CD14-positive monocyte (primary cell): ENCODE measurements at regions of chr19 and their contacts with region 1.

Region 1: GRCh38 chr19:55088543-55089341 is 13.1 kb downstream of the EPS8L1 start:
- DNase-seq: peak; percentile 40 to 57 (median 54)
- H3K4me3 ChIP-seq: no peak overlapping the region
- H3K4me3 Mint-ChIP-seq: peak overlapping the region; percentile 44 to 91
- H3K27ac ChIP-seq: no peak overlapping the region
- H3K27ac Mint-ChIP-seq: peak overlapping the region in 4 of 7 donors; percentile 40 to 79 (median 52)
- H3K4me1 ChIP-seq: peaks cover 18 to 21% of the 10 kb centered on the region in 2 donors
- H3K4me1 Mint-ChIP-seq: peaks cover 26% of the 10 kb centered on the region
- H3K27me3 ChIP-seq: peaks cover 21 to 48% of the 10 kb centered on the region in 2 donors
- H3K27me3 Mint-ChIP-seq: peaks cover 47 to 55% (median 52%) of the 10 kb centered on the region in 3 donors
- CTCF ChIP-seq: peak; percentile 96

Region 2: DNA sequence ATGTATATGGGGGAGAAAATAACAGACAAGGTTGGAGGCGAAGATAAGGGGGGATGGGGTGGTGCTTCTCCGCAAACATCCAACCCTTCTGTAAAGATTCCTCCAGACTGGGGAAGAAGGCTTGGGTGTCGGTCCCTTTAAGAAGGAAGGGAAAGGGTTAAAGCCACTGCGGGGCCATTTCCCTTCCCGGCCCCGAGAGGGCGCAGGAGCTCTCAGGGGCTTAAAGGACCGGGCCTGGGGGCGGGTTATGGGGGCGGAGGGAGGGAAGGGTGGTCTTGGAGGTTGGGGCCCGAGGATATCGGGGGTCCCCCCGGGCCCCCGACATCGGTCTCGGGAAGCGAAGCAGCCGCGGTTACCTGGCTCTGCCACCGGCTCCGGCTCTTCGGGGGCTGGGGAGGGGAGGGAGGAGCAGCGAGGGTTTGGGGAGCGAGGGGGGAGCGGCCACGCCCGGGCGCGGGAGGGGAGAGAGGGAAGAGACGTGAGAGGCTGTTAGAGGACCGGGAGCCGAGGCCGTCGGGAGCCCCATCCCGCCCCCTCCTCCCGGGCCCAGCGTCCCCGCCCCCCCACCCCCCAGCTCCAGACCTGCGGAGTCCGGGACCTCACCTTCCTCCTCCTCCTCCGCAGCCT is 57.4 kb after region 1 on chr19:
- intact Hi-C with region 1: no loop called
- DNase-seq: no peak
- H3K4me3 ChIP-seq: peak overlapping the region; percentile 1 to 62 (median 11)
- H3K4me3 Mint-ChIP-seq: peak overlapping the region; percentile 31 to 57
- H3K27ac ChIP-seq: no peak overlapping the region
- H3K27ac Mint-ChIP-seq: no peak overlapping the region
- H3K4me1 ChIP-seq: peaks cover 25 to 30% of the 10 kb centered on the region in 2 donors
- H3K4me1 Mint-ChIP-seq: peaks cover 26% of the 10 kb centered on the region
- H3K27me3 ChIP-seq: peaks cover 10 to 55% of the 10 kb centered on the region in 2 donors
- H3K27me3 Mint-ChIP-seq: peaks cover 63 to 82% (median 76%) of the 10 kb centered on the region in 3 donors
- CTCF ChIP-seq: peak; percentile 54

Region 3: GRCh38 chr19:55166530-55167268 is 78.0 kb after region 1 on chr19 and contains the start of gene DNAAF3:
- intact Hi-C with region 1: loop called in 1 of 2 experiments (anchors 10 kb)
- DNase-seq: peak; percentile 64 to 80 (median 70)
- H3K4me3 ChIP-seq: peak within 1 kb of the TSS in 1 of 3 experiments; percentile 55
- H3K4me3 Mint-ChIP-seq: peak within 1 kb of the TSS; percentile 60 to 92
- H3K27ac ChIP-seq: no peak within 1 kb of the TSS
- H3K27ac Mint-ChIP-seq: peak within 1 kb of the TSS in 3 of 7 donors; percentile 5 to 47 (median 41)
- H3K4me1 ChIP-seq: peaks cover 15 to 18% of the 10 kb centered on the region in 2 donors
- H3K4me1 Mint-ChIP-seq: peaks cover 12% of the 10 kb centered on the region
- H3K27me3 ChIP-seq: peaks cover 13 to 73% of the 10 kb centered on the region in 2 donors
- H3K27me3 Mint-ChIP-seq: peaks cover 65 to 89% (median 87%) of the 10 kb centered on the region in 3 donors
- CTCF ChIP-seq: no peak
- polyA plus RNA-seq, gene DNAAF3: 0.19 TPM in 1 of 3 donors, not detected in the others